Activated CD4-positive, alpha-beta T cell treated with anti-CD3 and anti-CD28 coated beads for 36 hours (primary cell): ENCODE measurements at regions of chr1 and their contacts with region 1.

Region 1: GRCh38 chr1:48061162-48062136 is 64.3 kb upstream of the TRABD2B start:
- DNase-seq: peak; percentile 56
- ATAC-seq: peak; percentile 42
- H3K4me3 Mint-ChIP-seq: no peak overlapping the region
- H3K27ac Mint-ChIP-seq: no peak overlapping the region
- H3K4me1 Mint-ChIP-seq: no peaks in the 10 kb centered on the region
- H3K27me3 Mint-ChIP-seq: no peaks in the 10 kb centered on the region

Region 2: DNA sequence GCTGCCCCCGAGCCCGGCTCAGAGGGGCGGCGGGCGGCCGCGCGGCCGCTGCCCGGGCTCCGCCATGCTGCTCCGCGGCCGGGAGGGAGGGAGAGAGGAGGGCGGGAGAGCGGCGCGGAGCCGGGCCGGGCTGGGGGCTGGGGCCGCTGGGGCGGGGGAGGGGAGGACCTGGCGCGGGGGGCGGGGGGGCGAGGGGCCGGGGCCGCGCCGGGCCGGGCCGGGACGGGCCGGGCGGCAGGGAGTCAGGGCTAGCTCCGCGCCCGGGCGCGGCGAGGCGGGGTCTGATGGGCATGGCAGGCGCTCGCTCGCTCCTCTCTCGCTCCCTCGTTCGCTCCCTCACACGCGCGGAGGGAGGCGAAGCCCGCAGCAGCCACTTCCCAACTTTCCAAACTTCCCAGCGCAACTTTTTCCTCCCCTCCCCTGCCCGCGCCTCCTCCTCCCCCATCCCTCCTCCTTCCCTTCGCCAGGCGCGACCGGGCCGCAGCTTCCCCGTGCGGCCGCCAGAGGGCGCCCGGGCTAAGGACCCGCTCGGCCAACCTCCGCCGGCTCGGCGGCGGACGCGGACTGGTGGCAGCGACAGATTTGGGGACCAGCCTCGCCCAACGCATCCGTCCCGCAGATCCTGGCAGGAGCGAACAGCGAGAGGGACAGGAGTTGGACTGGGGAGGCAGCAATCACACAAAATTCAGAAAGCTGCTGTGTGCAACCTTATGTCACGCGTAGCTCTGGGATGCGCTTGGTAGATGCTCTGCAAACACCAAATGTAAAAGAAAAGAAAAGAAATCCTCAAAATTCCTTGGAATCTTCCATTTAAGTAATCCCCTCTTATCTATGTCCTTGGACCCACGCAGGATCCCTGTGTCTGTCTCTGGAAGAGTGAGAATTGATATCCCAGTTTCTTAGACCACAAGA is 63.9 kb before region 1 on chr1 and contains the start of gene TRABD2B:
- CTCF ChIA-PET with region 1: interaction called, 10 read pairs
- POLR2A ChIA-PET with region 1: no interaction called
- intact Hi-C with region 1: loop called (anchors 1 kb)
- DNase-seq: peak; percentile 80
- ATAC-seq: peak; percentile 92
- H3K4me3 Mint-ChIP-seq: peak within 1 kb of the TSS; percentile 53
- H3K27ac Mint-ChIP-seq: no peak within 1 kb of the TSS
- H3K4me1 Mint-ChIP-seq: peaks cover 4% of the 10 kb centered on the region
- H3K27me3 Mint-ChIP-seq: peaks cover 40% of the 10 kb centered on the region
- total RNA-seq, gene TRABD2B: not detected